Common myeloid progenitor, CD34-positive (primary cell): ENCODE measurements at regions of chr19 and their contacts with region 1.

Region 1: GRCh38 chr19:4471403-4472173 is 509 bp upstream of the HDGFL2 start:
- DNase-seq: peak; percentile 100
- H3K4me3 ChIP-seq: peak overlapping the region; percentile 44 to 87 (median 79)
- H3K27ac ChIP-seq: peak overlapping the region; percentile 75 to 89
- H3K4me1 ChIP-seq: peaks cover 0 to 32% (median 26%) of the 10 kb centered on the region in 4 experiments
- H3K27me3 ChIP-seq: no peaks in the 10 kb centered on the region

Region 2: DNA sequence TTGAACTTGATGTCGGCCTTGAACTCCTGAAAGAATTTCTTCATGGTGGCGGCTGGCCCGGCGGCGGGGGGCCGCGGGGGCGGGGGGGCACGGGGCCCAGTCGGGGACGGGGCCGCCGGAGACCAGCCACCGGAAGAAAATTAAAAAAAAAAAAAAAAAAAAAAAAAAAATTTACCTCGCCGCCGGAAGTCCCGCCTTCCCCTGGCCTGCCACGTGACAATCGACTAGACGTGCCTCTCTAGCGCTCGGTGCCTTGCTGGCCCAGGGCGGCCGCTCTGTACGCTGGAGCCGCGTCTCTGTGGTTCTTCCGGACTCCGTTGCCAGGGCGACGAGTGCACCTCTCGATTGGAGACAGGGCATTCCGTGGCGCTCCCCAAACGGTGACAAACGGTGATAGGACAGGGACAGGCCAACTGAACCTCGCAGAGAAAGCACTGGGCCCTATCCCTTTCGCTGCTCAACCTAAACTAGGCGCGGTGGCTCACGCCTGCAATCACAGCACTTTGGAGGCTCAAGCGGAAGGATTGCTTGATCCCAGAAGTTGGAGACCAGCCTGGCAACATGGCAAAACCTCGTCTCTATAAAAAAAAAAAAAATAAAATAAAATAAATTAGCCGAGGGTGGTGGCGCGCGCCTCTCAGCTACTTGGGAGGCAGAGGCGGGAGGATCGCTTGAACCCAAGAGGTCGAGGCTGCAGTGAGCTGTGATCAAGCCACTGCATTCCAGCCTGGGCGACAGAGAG is 13.8 kb before region 1 on chr19 and contains the start of gene UBXN6:
- CTCF ChIA-PET with region 1: interaction called, 11 read pairs
- POLR2A ChIA-PET with region 1: interaction called, 6 read pairs
- DNase-seq: peak; percentile 99 to 100 (median 99)
- H3K4me3 ChIP-seq: peak within 1 kb of the TSS; percentile 48 to 86 (median 75)
- H3K27ac ChIP-seq: peak within 1 kb of the TSS in 1 of 2 experiments; percentile 76
- H3K4me1 ChIP-seq: peaks cover 2 to 23% (median 17%) of the 10 kb centered on the region in 4 experiments
- H3K27me3 ChIP-seq: no peaks in the 10 kb centered on the region